Head of caudate nucleus (tissue), 42 donors: ENCODE measurements at regions of chr7 and their contacts with region 1.

Region 1: DNA sequence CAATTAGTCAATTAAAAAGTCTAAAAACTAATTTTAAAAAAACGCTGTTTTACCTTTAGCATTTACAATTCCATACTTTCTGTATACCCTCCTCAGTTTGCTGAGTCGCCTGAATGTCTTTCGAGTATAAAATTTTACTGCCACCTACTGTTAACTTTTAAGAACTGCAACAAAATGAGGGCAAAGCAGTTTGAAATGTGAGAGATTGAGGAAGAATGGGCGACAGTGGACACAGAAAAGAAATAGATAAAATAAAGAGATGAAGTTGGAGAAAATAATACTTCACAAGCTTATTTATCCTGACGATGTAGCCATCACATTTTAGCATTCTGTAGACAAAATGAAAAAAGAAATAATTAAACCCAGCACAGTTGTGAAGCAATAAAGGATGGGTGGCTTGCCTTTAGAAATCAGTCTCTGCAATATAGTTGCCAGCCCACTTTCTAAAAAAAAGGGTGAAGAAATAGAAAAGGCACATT is 110.8 kb upstream of the PTN start:
- DNase-seq: peak in 2 of 42 donors; percentile 24 to 54

Region 2: DNA sequence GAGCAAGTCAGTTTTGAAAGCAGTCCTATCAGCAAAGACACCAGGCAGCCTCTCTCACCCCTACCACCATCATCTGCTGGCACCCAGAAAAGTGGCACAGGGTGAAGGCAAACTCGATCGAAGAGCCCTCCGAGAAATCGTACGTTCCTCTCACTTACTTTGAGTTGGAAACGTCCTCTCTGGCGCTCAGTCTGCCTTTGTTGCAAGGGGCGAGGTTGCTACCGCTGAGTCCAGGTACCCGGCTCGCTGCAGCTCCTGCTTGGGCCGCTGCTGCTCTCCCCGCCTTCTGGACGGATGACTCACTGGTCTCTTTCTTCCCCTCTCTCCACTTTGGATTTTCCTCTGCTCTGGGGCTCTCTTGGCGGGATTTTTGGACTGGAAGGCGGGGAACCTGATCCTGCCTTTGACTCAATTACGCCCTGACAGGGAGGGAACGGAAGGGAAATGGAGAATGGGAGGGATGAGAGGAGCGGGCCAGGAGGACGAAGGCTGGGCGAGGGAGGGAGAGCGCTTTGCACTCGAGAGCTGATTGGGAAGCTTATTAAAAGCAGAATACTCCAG is 110.9 kb before region 1 on chr7 and contains the start of gene PTN:
- intact Hi-C with region 1: loop called (anchors 10 kb)
- DNase-seq: peak; percentile 26 to 84 (median 56)

Region 3: DNA sequence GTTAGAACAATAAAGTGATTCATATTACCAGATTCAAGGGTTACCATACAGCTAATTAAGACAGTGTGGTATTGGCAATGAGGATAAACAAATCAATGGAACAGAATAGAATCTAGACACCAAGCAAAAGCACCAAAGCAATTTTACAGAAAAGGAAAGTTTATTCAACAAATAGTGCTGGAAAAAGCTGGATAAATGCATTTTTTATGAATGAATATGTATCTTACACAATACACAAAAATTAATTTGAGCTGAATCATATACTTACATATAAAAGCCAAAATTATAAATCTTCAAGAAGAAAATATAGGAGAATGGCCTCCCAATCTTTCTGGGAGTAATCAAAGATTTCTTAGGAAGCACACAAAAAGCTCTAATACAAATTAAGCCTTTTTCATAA is 109.7 kb after region 1 on chr7:
- intact Hi-C with region 1: no loop called
- DNase-seq: no peak

Region 4: DNA sequence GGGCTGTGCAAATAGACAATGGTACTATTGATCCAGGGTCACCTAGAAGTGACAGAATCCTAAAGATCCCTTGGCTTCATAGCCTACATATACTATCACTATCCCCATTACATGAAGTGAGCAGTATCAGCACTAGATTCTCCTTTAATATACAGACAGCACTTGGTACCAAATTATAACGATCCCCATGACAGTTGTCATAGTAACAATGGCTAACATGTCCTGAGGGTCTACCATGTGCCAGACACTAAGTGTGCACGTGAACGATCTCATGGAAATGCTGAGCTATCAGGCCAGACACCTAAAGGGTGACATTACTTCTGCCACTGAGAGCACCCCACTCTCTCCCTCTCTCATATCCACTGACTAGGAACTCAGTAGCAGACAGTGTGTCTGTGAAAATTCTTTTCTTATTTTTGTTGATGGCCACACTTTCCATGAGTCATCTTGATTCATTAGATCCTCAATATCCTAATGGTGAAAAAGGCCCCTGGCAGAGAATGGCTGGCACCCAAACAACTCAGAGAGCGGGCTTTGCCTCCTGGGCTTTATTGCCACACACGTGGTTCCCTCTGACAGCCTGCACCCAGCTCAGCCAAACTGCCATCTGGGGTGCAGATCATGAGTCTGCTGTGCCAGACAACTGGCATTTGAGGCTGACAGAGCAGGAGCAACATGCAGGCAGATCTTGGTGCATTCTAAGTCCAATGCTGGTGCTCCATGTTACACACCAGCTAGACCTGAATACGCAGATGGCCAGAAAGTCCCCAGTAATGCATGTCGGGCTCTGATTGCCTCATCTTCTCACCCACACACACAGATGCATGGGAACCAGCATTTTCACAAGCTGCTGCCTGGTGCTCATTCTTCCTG is 216.2 kb after region 1 on chr7:
- intact Hi-C with region 1: no loop called
- DNase-seq: no peak